ENCODE measurements at regions of chr17 and their contacts with region 1.

Region 1: DNA sequence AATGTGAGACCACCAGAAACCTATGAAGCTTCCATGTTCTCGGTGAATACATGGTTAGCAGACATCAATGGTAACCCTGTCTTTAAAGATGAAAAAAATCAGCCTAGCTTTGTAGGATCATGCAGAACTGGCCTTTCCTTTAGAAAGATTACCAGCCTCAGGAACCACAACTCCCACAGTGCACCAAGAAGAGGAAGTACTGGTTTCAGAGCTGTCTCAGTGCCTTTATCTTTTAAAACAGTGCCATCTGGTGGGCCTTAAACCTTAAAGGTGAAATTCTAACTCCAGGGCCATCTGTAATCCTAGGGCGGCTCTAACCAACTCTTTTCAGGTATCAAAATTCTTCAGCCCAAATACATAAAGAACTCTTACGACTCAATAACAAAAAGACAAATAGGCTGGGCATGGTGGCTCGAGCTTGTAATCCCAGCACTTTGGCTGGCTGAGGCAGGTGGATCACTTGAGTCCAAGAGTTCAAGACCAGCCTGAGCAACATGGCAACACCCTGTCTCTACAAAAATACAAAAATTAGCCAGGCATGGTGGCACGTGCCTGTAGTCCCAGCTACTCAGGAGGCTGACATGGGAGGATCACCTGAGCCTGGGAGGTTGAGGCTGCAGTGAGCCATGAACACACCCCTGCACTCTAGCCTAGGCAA is 5.4 kb downstream of the ATPAF2 start:
- DNase-seq: peak; percentile 80
- H3K4me3 Mint-ChIP-seq: no peak overlapping the region
- H3K27ac Mint-ChIP-seq: no peak overlapping the region
- H3K4me1 Mint-ChIP-seq: peaks cover 37% of the 10 kb centered on the region
- H3K27me3 Mint-ChIP-seq: no peaks in the 10 kb centered on the region

Region 2: GRCh38 chr17:17890773-17891759 is 142.5 kb before region 1 on chr17:
- CTCF ChIA-PET with region 1: interaction called, 13 read pairs
- POLR2A ChIA-PET with region 1: interaction called, 3 read pairs
- DNase-seq: peak; percentile 60
- H3K4me3 Mint-ChIP-seq: no peak overlapping the region
- H3K27ac Mint-ChIP-seq: peak overlapping the region; percentile 5
- H3K4me1 Mint-ChIP-seq: peaks cover 12% of the 10 kb centered on the region
- H3K27me3 Mint-ChIP-seq: no peaks in the 10 kb centered on the region

Region 3: DNA sequence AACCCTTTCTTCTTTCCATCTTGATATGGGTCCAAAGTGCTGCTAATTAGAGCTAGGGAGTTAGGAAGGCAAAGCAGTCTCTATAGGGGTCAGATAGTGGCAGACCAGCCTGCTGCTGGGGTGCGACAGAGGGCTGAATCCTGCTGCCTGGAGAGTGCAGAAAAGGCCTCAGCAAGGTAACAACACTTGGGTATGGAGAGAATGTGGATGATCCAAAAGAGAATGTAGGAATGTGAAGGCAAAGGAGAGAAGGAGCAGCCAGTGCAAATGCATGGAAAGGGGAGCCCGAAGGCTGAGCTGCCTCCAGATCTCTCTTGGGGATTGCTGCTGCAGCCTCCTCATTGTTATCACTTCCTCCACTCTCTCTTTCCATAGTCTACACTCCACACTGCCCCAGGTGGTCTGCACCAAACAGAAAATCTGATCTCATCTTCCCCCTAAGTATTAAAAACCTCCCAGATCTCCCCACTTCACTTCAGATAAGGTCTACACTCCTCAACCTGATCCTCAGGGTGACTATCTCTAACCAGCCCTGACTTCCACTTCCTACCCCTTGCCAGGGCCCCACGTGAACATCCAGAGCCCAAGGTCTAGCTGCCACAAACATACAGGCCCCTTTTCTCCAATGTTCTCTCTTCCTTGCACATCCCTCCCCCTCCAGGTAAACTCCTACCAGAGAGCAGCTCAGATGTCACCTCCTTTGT is 90.1 kb before region 1 on chr17:
- CTCF ChIA-PET with region 1: no interaction called
- POLR2A ChIA-PET with region 1: no interaction called
- DNase-seq: no peak
- H3K4me3 Mint-ChIP-seq: no peak overlapping the region
- H3K27ac Mint-ChIP-seq: no peak overlapping the region
- H3K4me1 Mint-ChIP-seq: peaks cover 9% of the 10 kb centered on the region
- H3K27me3 Mint-ChIP-seq: no peaks in the 10 kb centered on the region

Measured in activated CD4-positive, alpha-beta T cell treated with anti-CD3 and anti-CD28 coated beads, Interleukin-2, amount 10 ng/mL, durations not matched to agents 7 days and 5 days (primary cell).